Heart left ventricle (tissue), 16 donors: ENCODE measurements at regions of chr15 and their contacts with region 1.

Region 1: GRCh38 chr15:91224755-91225380 is 124.8 kb downstream of the SV2B start:
- DNase-seq: no peak
- ATAC-seq: peak in 2 of 4 donors; percentile 45 to 64
- H3K4me3 ChIP-seq: no peak overlapping the region
- H3K27ac ChIP-seq: no peak overlapping the region
- H3K4me1 ChIP-seq: peaks cover 0 to 4% (median 0%) of the 10 kb centered on the region in 12 donors
- H3K27me3 ChIP-seq: peaks cover 0 to 7% (median 0%) of the 10 kb centered on the region in 9 donors
- CTCF ChIP-seq: peak; percentile 52 to 80 (median 66)
- POLR2A ChIP-seq: no peak

Region 2: GRCh38 chr15:91055548-91056331 is 169.1 kb before region 1 on chr15:
- intact Hi-C with region 1: loop called (anchors 1 to 5 kb)
- DNase-seq: peak in 4 of 5 donors; percentile 45 to 60 (median 56)
- ATAC-seq: peak; percentile 42 to 84 (median 82)
- H3K4me3 ChIP-seq: no peak overlapping the region
- H3K27ac ChIP-seq: no peak overlapping the region
- H3K4me1 ChIP-seq: peaks cover 0 to 3% (median 0%) of the 10 kb centered on the region in 12 donors
- H3K27me3 ChIP-seq: peaks cover 0 to 27% (median 3%) of the 10 kb centered on the region in 9 donors
- CTCF ChIP-seq: peak; percentile 63 to 85 (median 78)
- POLR2A ChIP-seq: no peak

Region 3: DNA sequence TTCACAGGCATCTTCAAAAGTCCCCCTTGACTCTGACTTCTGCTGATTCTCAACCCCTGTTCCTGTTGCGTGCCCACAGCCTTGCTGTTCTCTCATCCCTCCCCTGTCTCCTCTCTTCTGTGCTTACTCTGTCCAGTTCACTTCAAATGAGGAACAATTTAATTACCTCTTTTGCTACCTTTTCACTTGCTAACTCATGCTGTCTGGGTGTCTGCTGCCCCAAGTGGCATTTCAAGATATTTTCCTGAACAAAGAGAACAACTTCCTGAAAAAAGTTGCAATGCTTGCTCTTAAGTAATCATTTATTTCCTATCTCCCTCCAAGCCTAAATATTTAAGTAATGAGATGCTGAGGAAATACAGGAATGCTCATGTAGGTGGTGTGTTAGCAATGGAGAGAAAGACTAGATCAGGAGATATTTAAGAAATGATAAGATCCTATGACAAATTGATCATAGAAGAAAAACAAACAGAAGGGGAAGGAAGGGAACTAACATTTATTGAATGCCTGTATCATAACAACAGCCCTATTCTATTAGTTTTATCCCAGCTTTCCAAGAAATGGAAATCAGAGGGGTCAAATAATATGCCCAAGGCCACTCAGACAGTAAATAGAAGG is 82.6 kb before region 1 on chr15:
- intact Hi-C with region 1: loop called in 2 of 10 experiments (anchors 5 to 10 kb)
- DNase-seq: no peak
- ATAC-seq: no peak
- H3K4me3 ChIP-seq: no peak overlapping the region
- H3K27ac ChIP-seq: no peak overlapping the region
- H3K4me1 ChIP-seq: no peaks in the 10 kb centered on the region
- H3K27me3 ChIP-seq: peaks cover 0 to 8% (median 0%) of the 10 kb centered on the region in 9 donors
- CTCF ChIP-seq: peak in 10 of 12 donors; percentile 23 to 51 (median 42)
- POLR2A ChIP-seq: no peak

Region 4: DNA sequence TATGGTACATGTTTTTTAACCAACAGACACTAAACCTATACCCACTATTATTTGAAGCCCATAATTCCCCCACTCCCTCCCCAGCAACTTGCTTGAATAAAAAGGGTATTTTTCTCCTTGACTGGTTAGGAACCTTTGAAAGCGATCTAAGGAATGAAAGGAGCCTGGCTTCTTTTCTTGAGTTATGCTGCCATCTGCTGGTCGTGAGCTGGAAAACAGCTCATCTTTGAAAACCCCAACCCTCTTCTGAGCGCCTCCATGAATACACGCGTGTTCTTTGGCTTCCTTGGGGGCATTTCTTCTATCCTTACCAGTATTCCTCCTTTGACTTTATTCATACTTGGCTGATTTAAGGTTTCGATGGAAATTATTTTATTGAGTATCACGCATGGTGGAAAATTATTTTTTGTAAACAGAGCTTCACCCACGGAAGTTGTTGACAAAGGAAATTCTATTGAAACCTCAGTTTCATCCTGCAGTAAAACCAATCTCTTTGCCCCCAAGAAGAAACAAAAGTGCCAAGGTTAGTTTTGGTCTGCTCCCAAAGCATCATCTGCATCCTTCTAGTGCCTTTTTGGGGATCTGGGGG is 46.8 kb after region 1 on chr15:
- intact Hi-C with region 1: loop called in 2 of 10 experiments (anchors 5 to 10 kb)
- DNase-seq: peak in 4 of 5 donors; percentile 24 to 44 (median 38)
- ATAC-seq: peak in 3 of 4 donors; percentile 44 to 82 (median 74)
- H3K4me3 ChIP-seq: no peak overlapping the region
- H3K27ac ChIP-seq: no peak overlapping the region
- H3K4me1 ChIP-seq: peaks cover 0 to 7% (median 0%) of the 10 kb centered on the region in 12 donors
- H3K27me3 ChIP-seq: no peaks in the 10 kb centered on the region
- CTCF ChIP-seq: peak; percentile 66 to 87 (median 83)
- POLR2A ChIP-seq: no peak